ENCODE measurements at regions of chrX and their contacts with region 1.

Region 1: GRCh38 chrX:107776649-107777535 is 641 bp upstream of the NCBP2L start:
- DNase-seq: peak; percentile 57
- H3K4me3 ChIP-seq: peak overlapping the region; percentile 49
- CTCF ChIP-seq: peak; percentile 50

Region 2: DNA sequence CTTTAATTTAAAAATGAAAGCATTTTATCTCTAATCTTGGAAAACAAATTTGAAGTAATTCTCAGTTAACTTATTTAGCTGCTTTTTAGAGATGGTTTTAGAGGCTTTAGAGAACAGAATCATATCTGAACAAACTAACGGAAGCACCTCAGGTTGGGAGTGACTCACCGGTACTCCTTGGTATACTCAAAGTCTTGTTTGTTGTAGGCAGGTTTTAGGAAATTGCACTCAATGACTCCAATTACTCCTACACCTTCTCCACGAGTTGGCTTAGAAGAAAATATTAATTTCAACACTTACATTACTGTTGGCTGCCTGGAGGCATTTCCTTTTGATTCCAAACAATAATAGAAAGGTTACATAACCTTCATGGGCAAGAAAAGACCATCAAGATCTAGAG is 800.5 kb before region 1 on chrX:
- CTCF ChIA-PET with region 1: no interaction called
- POLR2A ChIA-PET with region 1: no interaction called
- DNase-seq: no peak
- H3K4me3 ChIP-seq: no peak overlapping the region
- CTCF ChIP-seq: no peak

Region 3: GRCh38 chrX:107725761-107726519 is 51.0 kb before region 1 on chrX:
- CTCF ChIA-PET with region 1: no interaction called
- POLR2A ChIA-PET with region 1: no interaction called
- DNase-seq: no peak
- H3K4me3 ChIP-seq: no peak overlapping the region
- CTCF ChIP-seq: no peak

Region 4: GRCh38 chrX:107766470-107767150 is 10.3 kb before region 1 on chrX:
- CTCF ChIA-PET with region 1: interaction called, 12 read pairs
- POLR2A ChIA-PET with region 1: no interaction called
- DNase-seq: no peak
- H3K4me3 ChIP-seq: no peak overlapping the region
- CTCF ChIP-seq: no peak

Region 5: GRCh38 chrX:107825698-107826237 is 48.9 kb after region 1 on chrX and contains the start of gene MID2:
- CTCF ChIA-PET with region 1: no interaction called
- POLR2A ChIA-PET with region 1: no interaction called
- DNase-seq: no peak
- H3K4me3 ChIP-seq: peak within 1 kb of the TSS; percentile 54
- CTCF ChIP-seq: no peak

Measured in AG04449 (cell line).